Sciatic nerve (tissue), 2 donors: ENCODE measurements at regions of chr5 and their contacts with region 1.

Region 1: GRCh38 chr5:66697791-66698564 is 101.8 kb downstream of the MAST4 start:
- DNase-seq: no peak
- ATAC-seq: no peak

Region 2: GRCh38 chr5:66333192-66333591 is 364.8 kb before region 1 on chr5:
- intact Hi-C with region 1: loop called (anchors 2 kb)
- DNase-seq: no peak
- ATAC-seq: no peak

Region 3: DNA sequence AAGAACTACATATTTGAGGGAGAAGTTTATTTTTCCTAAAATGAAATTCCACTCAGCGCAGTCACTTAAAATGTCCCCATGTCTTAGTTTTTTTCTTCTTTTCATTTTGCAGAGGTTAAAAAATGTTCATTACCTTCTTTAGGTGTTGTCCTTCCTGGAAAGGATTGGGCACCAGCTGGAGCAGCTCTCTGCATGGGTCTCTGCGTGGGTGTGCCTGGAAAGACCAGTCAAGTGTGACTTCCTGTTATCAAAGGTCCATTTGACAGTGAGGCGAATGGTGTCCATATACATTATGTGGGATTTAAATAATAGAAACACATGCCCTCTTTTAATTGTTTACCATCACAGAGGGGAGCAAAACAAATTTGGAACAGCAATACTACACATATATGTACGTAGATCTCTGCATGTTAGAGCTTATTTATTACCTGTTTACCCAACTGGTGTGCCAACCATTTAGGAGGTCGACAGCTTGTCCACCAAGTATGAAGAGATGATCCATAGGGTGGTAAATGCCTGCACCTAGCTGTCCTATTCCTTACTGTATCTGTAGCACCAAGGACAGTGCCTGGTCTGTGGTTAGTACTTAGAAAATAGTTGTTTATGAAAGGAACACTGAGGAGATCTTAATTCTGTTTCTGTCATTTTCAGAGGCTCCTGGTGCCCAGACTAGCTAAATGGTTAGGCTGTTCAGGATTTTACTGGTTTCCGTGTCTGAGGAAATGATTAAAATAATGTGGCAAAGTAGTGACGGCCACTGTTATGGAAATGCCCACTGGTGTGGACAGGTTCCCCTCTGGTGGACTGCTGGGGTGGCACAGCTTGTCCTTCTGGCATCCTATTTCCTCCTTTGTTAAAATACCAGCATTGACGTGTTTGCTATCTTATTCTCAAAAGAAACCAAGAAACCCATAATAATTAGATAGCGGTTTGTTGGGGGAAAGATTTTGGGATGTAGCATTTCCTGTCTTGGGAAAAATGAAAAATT is 98.6 kb after region 1 on chr5:
- intact Hi-C with region 1: no loop called
- DNase-seq: no peak
- ATAC-seq: no peak